ENCODE measurements at regions of chr7 and their contacts with region 1.

Region 1: GRCh38 chr7:151315038-151315655 is 26.5 kb upstream of the NUB1 start:
- DNase-seq: peak; percentile 80 to 91
- H3K4me3 ChIP-seq: no peak overlapping the region
- CTCF ChIP-seq: peak in 2 of 3 donors; percentile 10 to 79
- POLR2A ChIP-seq: no peak

Region 2: DNA sequence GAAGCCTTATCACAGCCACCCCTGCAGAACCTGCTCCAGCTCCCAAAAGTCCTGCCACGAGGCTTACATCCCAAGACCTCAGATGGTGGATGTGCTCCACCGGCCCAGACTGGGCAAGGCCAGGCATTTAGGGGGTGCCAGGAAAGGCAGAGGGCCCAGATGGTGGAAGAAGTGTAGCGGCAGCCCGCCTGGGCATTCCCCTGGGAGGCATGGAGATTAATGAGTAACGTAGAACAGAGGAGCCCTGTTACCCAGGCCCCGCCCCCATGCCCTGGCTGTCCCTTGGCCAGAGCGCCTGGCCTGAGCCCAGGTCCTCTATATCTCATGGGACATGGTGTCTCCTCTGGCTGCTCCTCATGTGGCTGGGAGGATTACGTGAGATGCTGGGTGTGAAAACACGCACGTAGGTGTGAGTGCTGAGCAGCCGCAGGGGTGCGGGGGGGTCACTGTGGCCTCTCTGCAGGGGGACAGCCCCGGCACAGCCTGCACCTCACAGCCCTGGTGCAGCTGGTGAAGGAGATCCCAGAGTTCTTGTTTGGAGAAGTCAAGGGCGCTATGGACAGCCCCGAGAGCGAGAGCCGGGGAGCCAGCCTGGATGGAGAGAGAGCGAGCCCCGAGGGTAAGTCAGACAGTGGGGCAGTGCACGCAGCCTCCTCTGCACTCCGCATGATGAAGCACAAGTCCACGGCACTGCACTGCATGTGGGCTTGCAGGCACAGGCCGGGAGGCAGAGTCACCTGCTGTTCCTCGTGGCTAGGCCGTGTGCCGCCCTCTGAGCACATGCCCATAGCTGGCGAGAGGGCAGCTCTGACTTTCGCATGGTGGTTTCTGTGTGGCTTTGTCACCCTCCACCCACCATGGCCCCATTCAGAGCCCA is 1594.5 kb before region 1 on chr7:
- intact Hi-C with region 1: loop called (anchors 5 kb)
- DNase-seq: peak in 1 of 2 donors; percentile 80
- H3K4me3 ChIP-seq: no peak overlapping the region
- CTCF ChIP-seq: no peak
- POLR2A ChIP-seq: no peak

Region 3: DNA sequence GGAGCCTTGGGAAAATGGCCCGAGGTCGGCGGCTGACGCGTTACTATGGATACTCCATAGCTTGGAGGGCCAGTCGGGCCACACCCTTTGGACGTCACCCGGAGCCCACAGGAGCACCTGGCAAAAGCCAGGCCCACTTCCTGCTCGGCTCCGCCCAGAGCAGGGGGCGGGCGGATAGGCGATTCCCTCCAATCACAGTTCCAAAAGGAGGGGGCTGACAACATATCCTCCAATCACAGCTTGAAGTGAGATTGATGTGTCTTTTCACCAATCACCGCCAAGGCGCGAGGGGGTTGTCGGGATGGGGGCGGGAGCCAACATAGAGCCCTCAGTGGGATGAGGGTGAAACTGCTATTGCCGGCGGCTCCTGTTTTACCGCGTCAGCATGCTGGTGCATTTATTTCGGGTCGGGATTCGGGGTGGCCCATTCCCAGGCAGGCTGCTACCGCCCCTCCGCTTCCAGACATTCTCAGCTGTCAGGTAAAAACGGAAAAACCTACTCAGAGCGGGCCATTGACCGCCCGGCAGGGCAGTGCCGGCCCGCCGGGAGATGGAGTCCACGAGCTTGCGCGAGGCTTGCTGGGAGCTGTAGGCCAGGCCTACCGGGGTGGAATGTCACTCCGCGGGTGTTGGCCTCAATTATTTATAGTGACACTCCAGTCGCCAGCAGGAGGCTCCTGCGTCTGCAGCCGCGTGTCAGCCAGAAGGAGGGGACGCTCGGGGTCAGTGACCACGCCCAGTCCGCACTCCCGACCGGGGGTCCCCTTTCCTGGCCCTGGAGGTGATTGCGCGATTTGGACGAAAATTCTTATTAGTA is 286.8 kb before region 1 on chr7 and contains the start of gene ABCB8:
- intact Hi-C with region 1: no loop called
- DNase-seq: peak; percentile 100
- H3K4me3 ChIP-seq: peak within 1 kb of the TSS; percentile 51
- CTCF ChIP-seq: peak in 1 of 3 donors; percentile 10
- POLR2A ChIP-seq: no peak
- total RNA-seq, gene ABCB8: 22.9 to 35.2 (median 27.6) TPM

Region 4: DNA sequence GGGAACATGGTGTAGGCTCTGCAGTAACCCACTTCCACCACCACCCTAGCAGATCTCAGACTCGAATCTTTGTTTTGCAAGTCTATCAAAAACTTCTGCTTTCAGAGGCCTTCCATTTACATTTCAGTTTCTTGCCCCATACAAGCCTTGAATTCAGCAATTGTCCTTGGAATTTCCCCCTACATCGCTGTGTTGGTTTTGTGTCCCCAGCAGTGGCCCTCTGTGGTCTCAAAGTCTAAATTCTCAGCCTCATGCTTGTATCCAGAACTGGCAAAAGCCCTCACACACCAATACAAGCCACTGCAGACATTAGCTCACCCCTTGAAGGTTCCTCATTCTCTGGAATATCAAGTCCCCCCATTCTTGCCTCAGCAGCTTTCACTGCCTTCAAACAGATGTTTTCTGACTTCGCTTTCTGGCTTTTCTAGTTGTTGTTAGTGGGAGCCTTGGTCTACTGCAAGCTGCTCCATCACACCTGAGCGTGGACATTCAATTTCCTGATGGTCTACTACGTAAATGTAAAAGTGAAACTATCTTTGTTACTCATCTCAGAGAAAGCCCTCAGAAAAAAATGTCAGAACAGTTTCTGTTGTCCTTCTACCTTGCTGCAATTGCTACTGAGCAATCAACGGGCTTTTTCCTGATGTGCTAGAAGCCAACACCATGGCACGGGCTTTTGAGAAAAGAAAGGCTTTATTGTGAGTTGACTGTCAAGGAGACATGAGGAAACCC is 24.7 kb after region 1 on chr7:
- intact Hi-C with region 1: no loop called
- DNase-seq: no peak
- H3K4me3 ChIP-seq: no peak overlapping the region
- CTCF ChIP-seq: no peak
- POLR2A ChIP-seq: no peak

Region 5: DNA sequence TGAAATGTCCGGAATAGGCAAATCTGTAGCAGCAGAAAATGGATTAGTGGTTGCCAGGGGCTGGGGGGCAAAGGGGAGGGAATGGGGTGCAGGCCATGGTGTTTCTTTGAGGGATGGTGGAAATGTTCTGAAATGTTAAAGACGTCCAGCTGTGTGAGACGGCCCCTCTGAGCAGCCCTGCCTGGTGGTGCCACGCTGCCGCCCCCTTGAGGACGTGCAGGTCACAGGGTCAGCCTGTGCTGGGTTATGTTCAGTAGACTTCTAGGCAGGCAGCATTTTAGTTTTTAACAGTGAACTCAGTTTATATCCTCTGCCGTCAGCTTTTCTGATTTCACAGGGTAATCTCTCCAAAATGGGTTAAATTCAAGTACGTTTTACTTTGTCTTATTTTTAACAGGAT is 35.9 kb after region 1 on chr7:
- intact Hi-C with region 1: loop called (anchors 5 kb)
- DNase-seq: no peak
- H3K4me3 ChIP-seq: no peak overlapping the region
- CTCF ChIP-seq: no peak
- POLR2A ChIP-seq: no peak

Region 6: GRCh38 chr7:151696721-151697514 is 381.8 kb after region 1 on chr7:
- intact Hi-C with region 1: no loop called
- DNase-seq: no peak
- H3K4me3 ChIP-seq: no peak overlapping the region
- CTCF ChIP-seq: no peak
- POLR2A ChIP-seq: no peak

Region 7: GRCh38 chr7:151759591-151760042 is 444.5 kb after region 1 on chr7:
- intact Hi-C with region 1: loop called (anchors 10 kb)
- DNase-seq: peak in 1 of 2 donors; percentile 37
- H3K4me3 ChIP-seq: no peak overlapping the region
- CTCF ChIP-seq: no peak
- POLR2A ChIP-seq: no peak